ENCODE measurements at regions of chr2 and their contacts with region 1.

Region 1: DNA sequence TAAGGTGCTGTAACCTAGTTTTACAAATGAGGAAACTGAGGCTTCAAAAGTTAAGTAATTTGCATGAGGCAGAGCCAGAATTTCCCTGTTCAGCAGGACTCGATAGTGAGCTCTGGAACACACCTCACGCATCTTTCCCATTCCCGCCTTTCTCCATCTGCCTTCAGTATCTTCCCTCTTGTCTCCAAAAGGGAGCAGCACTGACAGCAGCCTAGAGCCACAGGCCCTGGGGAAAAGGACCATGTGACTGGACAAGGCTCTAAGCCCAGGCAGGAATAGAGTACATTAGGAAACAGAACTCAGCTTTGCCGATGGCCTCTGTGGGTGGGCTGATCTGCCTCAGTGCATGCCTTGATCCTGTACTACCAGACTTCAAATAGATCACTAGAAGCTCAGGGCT is 21.5 kb downstream of the GPR155 start:
- DNase-seq: no peak
- H3K4me3 Mint-ChIP-seq: no peak overlapping the region
- H3K27ac Mint-ChIP-seq: no peak overlapping the region
- H3K4me1 Mint-ChIP-seq: no peaks in the 10 kb centered on the region
- H3K27me3 Mint-ChIP-seq: no peaks in the 10 kb centered on the region

Region 2: DNA sequence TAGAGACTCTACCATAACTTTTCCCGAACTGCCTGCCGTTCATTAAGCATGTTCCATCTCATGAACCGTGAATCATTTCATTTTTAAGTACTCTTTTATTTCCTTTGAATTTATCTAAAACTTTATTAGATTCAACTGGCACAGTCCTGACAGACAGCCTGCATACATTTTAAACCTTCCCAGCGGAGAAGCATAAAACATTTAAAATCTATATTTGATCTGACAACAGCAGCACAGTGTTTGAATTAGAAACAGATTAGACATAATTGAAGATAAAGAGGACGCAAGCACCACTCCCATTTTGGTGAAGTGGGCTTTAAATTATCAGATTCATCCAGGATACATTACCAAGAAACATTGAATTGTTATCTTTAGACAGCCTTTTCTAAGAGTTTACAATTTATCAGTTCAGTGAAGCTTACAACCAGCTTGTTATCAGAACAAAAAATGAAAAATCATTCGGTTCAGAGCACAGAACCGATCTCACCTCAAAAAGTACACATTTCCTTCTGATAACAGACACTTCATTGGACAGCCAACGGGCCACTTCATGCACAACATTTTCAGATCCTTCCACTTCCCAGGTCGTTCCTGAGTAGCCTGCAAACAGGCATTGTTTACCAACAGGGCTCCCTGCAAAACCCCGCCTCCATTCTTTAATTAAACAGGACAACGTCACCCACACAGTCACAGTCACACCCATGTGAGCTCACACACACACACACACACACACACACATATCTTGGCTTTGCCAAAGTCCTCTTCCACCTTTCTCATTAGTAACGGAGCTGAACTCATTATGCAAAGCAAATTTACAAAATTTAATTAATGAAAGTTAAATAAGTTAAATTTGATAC is 671.4 kb before region 1 on chr2:
- intact Hi-C with region 1: no loop called
- DNase-seq: no peak
- H3K4me3 Mint-ChIP-seq: no peak overlapping the region
- H3K27ac Mint-ChIP-seq: no peak overlapping the region
- H3K4me1 Mint-ChIP-seq: no peaks in the 10 kb centered on the region
- H3K27me3 Mint-ChIP-seq: peaks cover 23% of the 10 kb centered on the region

Region 3: GRCh38 chr2:174522553-174522952 is 57.2 kb after region 1 on chr2:
- intact Hi-C with region 1: loop called (anchors 1 kb)
- DNase-seq: no peak
- H3K4me3 Mint-ChIP-seq: no peak overlapping the region
- H3K27ac Mint-ChIP-seq: no peak overlapping the region
- H3K4me1 Mint-ChIP-seq: peaks cover 9% of the 10 kb centered on the region
- H3K27me3 Mint-ChIP-seq: peaks cover 32% of the 10 kb centered on the region

Region 4: DNA sequence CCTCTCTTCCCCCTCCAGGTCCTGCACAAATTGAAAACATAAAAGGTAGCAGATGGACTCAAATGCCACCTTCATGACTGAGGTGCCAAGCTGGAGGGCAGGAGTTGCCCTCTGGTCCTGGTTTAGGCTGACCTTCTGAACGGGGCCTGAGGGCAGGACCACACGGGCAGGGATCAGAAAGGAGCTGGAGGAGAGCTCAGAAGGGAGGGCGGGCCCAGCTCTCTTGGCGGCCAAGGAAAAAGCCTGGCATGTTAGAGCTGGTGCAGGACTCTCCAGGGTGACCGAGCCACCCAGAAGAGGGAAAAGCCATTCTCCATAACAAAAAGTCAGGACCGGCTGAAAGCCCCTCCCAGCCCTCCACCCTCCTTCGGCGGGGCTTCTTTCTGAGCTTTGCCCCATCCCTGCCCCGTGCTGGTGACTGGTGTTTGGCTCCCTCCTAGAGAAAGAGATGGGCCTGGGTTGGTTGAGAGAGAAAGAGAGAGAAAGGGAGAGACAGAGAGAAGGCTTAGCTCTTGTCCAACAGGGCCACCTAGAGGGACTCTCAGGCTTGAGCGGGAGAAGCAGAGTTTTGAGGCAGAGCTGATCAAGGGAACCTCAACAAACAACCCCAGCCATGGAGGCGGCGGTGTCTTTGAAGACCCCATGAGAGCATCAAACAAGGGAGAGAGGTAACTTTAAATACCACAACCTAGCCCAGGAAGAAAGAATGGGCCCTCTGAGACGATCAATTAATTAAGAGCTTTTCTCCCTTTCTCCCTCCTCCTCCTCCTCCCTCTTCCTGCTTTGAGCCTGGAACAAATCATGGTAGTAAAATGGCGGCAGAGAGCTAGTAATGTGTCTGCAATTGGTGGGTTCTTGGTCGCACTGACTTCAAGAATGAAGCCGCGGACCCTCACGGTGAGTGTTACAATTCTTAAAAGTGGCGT is 81.5 kb after region 1 on chr2:
- intact Hi-C with region 1: loop called (anchors 1 kb)
- DNase-seq: peak; percentile 31
- H3K4me3 Mint-ChIP-seq: no peak overlapping the region
- H3K27ac Mint-ChIP-seq: no peak overlapping the region
- H3K4me1 Mint-ChIP-seq: peaks cover 2% of the 10 kb centered on the region
- H3K27me3 Mint-ChIP-seq: peaks cover 8% of the 10 kb centered on the region

Region 5: DNA sequence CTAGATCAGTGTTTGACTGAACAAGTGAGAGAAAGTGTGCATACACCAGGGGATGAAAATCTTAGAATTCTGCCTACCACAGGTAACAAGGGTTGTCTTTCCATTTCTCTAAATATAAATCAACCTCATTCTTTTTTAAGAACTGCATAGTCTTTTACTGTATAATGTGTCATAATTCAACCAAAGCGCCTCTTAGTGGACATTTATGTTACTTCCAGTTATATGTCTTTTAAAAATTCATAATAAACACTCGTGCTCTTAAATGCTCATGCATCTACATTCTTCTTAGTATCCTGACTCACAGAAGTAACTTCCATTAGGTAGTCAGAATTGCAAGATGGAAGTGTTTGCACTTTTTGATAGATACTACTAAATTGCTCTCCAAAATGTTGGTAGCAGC is 222.8 kb after region 1 on chr2:
- intact Hi-C with region 1: loop called (anchors 2 kb)
- DNase-seq: no peak
- H3K4me3 Mint-ChIP-seq: no peak overlapping the region
- H3K27ac Mint-ChIP-seq: no peak overlapping the region
- H3K4me1 Mint-ChIP-seq: peaks cover 18% of the 10 kb centered on the region
- H3K27me3 Mint-ChIP-seq: peaks cover 10% of the 10 kb centered on the region